ENCODE measurements at regions of chr16 and their contacts with region 1.

Region 1: GRCh38 chr16:30122604-30123160 is 338 bp downstream of the MAPK3 start:
- DNase-seq: peak in 1 of 2 donors; percentile 74
- ATAC-seq: peak; percentile 49
- H3K4me3 ChIP-seq: peak overlapping the region; percentile 80 to 97
- H3K27ac ChIP-seq: peak overlapping the region in 1 of 2 donors; percentile 43
- H3K4me1 ChIP-seq: peaks cover 0 to 2% of the 10 kb centered on the region in 2 donors
- H3K27me3 ChIP-seq: no peaks in the 10 kb centered on the region

Region 2: GRCh38 chr16:30065143-30065850 is 57.4 kb before region 1 on chr16 and contains the start of gene ALDOA:
- intact Hi-C with region 1: loop called in 1 of 2 experiments (anchors 5 kb)
- DNase-seq: peak; percentile 99
- ATAC-seq: peak; percentile 94
- H3K4me3 ChIP-seq: peak within 1 kb of the TSS; percentile 57 to 90
- H3K27ac ChIP-seq: peak within 1 kb of the TSS; percentile 92 to 94
- H3K4me1 ChIP-seq: no peaks in the 10 kb centered on the region
- H3K27me3 ChIP-seq: no peaks in the 10 kb centered on the region
- total RNA-seq, gene ALDOA: 791 to 861 TPM

Region 3: DNA sequence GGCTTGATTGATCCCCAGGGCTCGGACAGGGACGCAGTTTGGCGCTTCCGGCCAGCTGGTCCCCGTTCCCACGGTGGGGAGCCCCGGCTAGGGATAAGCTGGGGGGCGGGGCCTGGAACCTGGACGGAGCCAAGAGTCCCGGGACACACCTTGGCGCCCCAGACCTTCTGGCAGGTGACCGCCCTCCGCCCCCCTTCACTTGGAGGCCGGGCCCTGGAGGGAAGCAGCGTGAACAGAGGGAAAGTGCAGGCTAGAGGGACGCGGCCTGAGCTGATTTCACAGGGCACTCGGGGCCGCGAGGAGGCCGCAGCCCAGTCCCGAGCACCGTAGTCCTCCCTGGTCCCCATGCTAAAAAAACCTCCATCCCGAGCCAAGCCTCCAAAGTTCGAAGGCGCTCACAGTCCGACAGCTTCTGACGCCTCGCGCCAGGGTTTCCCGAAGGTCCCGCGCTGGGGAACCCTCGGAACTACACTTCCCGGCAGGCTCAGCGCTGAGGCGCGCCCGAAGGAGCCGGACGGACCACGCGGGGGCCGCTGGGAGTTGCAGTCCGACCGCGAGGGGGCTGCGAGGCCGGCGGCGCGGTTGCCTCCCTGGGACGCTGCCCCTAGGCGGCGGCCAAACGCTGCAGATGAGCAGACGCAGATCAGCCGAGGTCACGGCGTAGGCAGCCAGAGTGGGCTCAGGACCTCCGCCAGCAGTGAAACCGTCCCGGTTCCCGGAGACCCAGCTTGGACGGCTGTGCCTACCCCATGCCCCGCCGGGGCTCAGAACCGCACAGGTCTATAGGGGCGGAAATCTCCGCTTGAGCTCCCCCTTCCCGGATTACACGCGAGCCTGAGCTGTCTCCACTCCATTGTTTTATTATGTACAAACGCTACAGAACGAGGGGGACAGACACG is 31.0 kb before region 1 on chr16 and contains the start of gene TBX6:
- intact Hi-C with region 1: loop called in 1 of 2 experiments (anchors 2 kb)
- DNase-seq: peak; percentile 96 to 98
- ATAC-seq: peak; percentile 95
- H3K4me3 ChIP-seq: peak within 1 kb of the TSS; percentile 0 to 15
- H3K27ac ChIP-seq: peak within 1 kb of the TSS in 1 of 2 donors; percentile 29
- H3K4me1 ChIP-seq: no peaks in the 10 kb centered on the region
- H3K27me3 ChIP-seq: no peaks in the 10 kb centered on the region
- total RNA-seq, gene TBX6: 0.62 to 1.4 TPM

Region 4: DNA sequence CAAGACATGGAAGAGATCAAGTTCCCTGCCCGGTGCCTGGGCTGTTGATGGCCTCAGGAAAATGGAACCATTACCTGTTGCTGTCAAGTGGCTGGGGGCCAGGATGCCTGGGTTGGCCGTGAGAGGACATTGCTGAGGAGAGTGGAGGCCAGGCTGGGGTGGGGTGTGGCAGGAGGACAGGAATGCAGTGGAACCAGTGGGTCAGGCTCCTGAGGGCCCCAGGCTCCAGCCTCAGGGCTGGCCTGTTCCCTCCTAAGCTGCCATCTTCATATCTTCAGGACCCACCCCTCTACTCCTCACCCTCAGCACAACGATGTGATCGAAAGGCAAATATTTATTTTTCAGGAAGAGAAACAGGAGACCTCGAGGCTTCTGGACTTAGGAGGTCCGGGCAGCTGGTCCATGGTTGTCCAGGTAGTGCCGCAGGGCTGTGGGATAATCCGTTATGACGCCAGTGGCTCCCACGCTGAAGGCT is 18.2 kb before region 1 on chr16:
- intact Hi-C with region 1: no loop called
- DNase-seq: no peak
- ATAC-seq: no peak
- H3K4me3 ChIP-seq: no peak overlapping the region
- H3K27ac ChIP-seq: no peak overlapping the region
- H3K4me1 ChIP-seq: no peaks in the 10 kb centered on the region
- H3K27me3 ChIP-seq: no peaks in the 10 kb centered on the region

Region 5: DNA sequence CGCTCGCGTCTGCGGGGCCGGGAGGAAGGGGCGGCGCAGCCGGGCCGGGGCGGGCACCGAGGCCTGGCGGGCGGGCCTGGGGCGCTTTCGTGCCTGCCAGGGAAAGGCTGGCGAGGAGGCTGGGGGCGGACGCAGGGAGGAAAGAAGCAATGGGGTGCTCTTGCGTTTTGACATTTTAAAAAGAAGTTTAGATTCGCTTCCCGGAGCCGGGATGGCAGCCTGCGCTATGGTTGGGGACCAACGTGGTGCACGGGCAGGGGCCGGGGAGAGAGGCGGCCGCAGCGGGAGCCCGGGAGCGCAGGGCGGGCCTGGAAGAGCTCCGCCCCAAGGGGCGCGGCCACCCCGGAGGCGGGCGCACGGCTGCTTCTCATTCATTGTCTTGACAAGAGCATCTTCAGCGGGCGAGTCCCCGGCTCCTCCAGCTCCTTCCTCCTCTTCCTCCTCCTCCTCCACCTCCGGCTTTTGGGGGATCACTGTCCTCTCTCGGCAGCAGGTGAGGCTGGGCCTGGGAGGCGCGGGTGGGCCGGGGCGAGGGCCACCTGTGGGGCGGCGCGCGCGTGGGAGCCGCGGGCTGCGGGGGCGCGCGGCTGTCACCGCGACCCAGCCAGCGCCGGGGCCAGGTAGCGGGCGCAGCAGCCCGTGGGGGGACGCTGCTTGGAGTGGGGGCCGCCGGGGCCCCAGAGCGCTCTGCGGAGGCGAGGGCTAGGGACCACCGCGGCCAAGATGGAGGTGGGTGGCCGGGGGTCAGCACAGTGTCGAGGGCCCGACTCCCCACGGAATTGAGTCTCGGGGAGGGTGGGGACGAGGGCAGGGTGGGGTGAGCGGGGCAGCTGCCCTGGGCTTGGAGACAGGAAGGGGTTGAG is 60.8 kb after region 1 on chr16 and contains the start of gene CORO1A:
- intact Hi-C with region 1: loop called in 1 of 2 experiments (anchors 5 kb)
- DNase-seq: peak; percentile 91 to 94
- ATAC-seq: peak; percentile 86
- H3K4me3 ChIP-seq: peak within 1 kb of the TSS; percentile 59 to 88
- H3K27ac ChIP-seq: peak within 1 kb of the TSS in 1 of 2 donors; percentile 31
- H3K4me1 ChIP-seq: no peaks in the 10 kb centered on the region
- H3K27me3 ChIP-seq: no peaks in the 10 kb centered on the region
- total RNA-seq, gene CORO1A: 38.4 to 42.8 TPM

Region 6: GRCh38 chr16:30417529-30418349 is 295.1 kb after region 1 on chr16:
- intact Hi-C with region 1: loop called in 1 of 2 experiments (anchors 10 kb)
- DNase-seq: peak; percentile 91 to 95
- ATAC-seq: peak; percentile 93
- H3K4me3 ChIP-seq: peak overlapping the region; percentile 7 to 39
- H3K27ac ChIP-seq: no peak overlapping the region
- H3K4me1 ChIP-seq: no peaks in the 10 kb centered on the region
- H3K27me3 ChIP-seq: no peaks in the 10 kb centered on the region